HepG2 (cell line): ENCODE measurements at regions of chr6 and their contacts with region 1.

Region 1: DNA sequence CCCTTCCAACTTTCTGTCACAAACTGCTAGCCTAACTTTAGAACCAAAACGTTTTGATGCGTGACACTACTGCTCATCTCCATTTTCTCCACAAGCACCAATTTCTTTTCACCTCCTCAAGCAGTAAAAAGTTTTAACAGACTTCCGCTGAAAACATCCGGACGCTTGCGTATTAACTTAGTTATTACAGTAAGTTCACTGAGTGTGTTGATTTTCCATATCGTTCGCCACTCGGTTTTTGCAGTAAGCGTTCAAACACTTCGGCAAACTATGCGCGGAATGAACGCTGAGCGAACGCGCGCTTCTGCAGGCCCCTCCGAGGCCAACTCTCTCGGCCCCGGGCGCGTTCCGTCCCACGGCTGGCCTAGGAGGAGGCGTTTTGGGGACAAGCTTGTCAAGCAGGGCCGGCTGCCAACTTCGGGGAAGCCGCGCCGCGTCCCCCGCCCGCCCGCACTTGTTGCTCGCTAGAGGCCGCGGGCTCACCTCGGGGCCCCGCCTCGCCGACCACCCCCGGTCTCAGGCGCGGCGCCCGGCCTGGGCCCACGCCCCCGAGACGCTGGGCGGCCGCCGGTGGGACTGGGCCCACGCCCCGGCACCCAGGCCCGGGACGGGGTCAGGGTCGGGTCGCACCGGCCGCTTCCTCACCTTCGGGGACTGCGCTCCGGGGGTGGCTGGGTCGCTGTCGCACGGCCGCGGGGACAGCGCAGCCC is 945 bp downstream of the PHF10 start:
- DNase-seq: peak; percentile 39
- ATAC-seq: peak; percentile 20
- H3K4me3 ChIP-seq: peak overlapping the region; percentile 82 to 93 (median 90)
- H3K27ac ChIP-seq: peak overlapping the region; percentile 72
- H3K4me1 ChIP-seq: peaks cover 60% of the 10 kb centered on the region
- H3K27me3 ChIP-seq: no peaks in the 10 kb centered on the region; a peak in 1 of 5 replicates
- CTCF ChIP-seq: 0 out of 2 replicates have a peak, but pooled peaks have one; percentile 10
- EP300 ChIP-seq: no peak
- POLR2A ChIP-seq: no peak
- RAD21 ChIP-seq: peak; percentile 28; the same call in 1 of the 2 replicates

Region 2: DNA sequence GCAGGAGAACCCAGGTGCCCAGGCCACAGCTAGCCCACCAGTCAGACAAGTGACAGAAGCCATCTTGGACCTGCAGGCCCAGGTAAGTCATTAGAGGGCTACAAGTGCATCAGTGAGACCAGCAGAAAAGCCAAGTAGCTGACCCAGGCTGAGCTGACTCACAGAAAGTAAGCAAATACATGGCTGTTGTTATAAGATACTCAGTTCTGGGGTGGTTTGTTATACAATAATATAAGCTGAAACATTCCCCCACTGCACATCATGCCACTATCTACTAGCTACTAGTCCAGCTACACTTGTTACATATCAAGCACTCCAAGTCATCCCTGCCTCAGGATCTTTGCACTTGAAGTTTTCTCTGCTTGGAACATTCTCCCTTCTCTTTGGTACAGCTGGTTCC is 18.0 kb after region 1 on chr6:
- CTCF ChIA-PET with region 1: no interaction called
- POLR2A ChIA-PET with region 1: interaction called, 15 read pairs
- in situ Hi-C with region 1: no loop called
- intact Hi-C with region 1: no loop called
- DNase-seq: no peak
- ATAC-seq: no peak; the same call in none of the 3 replicates
- H3K4me3 ChIP-seq: no peak overlapping the region
- H3K27ac ChIP-seq: no peak overlapping the region
- H3K4me1 ChIP-seq: peaks cover 2% of the 10 kb centered on the region; the same call in 1 of the 2 replicates
- H3K27me3 ChIP-seq: peaks cover 0 to 2% of the 10 kb centered on the region in 2 experiments; a peak in 2 of 5 replicates
- CTCF ChIP-seq: no peak
- EP300 ChIP-seq: no peak
- POLR2A ChIP-seq: no peak
- RAD21 ChIP-seq: no peak

Region 3: DNA sequence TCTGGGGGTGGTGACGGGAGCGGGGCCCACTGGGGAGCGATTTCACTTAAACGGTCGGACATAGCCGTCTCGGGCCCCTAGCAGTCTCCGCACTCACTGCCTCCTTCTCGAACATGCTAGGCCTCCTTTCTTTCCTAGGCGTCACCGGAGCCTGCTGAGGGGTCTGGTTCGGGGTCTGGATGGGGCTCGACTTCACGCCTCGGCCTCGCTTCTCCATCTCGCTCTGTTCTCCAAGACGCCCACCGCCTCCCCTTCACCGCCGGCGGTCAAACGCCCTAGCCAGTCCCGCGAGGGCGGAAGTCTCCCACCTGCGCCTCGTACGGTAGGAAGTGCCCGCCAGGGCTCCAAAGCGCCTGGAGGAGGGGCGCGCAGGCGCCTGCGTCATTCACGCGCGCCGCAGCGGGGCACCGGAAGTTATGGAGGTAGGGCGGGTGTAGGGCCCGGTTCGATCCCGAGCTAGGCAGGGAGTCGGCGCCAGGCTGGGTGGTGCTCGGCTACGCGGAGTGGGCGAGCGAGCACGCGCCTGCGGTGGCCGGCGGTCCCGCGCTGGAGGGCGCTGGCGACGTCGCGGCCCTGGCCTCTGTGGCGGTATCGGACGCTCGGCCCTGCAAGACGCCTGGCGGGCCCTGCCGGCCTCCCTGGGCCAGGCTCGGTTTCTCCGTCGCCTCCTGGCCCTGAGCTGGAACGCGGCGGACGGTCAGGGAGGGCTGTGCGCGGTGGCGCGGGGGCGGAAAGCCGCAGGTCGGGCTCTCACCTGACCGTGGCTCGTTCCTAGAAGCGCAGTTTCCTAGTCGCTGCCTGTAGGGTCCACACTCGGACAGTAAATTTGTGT is 28.1 kb after region 1 on chr6 and contains the starts of genes DYNLT2 and ERMARD:
- CTCF ChIA-PET with region 1: no interaction called
- POLR2A ChIA-PET with region 1: interaction called, 92 read pairs
- in situ Hi-C with region 1: no loop called
- intact Hi-C with region 1: loop called (anchors 1 kb)
- DNase-seq: peak; percentile 96
- ATAC-seq: peak; percentile 95
- H3K4me3 ChIP-seq: peak within 1 kb of the TSS; percentile 88 to 91 (median 90)
- H3K27ac ChIP-seq: peak within 1 kb of the TSS; percentile 96
- H3K4me1 ChIP-seq: peaks cover 48% of the 10 kb centered on the region
- H3K27me3 ChIP-seq: no peaks in the 10 kb centered on the region; a peak in 1 of 5 replicates
- CTCF ChIP-seq: peak; percentile 52
- EP300 ChIP-seq: peak in 1 of 2 experiments; percentile 68; a peak in 3 of 4 replicates
- POLR2A ChIP-seq: peak; percentile 90 to 99
- RAD21 ChIP-seq: peak; percentile 88
- total RNA-seq, gene DYNLT2: 3.1 and 4.3 TPM in 2 replicates
- total RNA-seq, gene ERMARD: 8.4 and 10.7 TPM in 2 replicates